Sciatic nerve (tissue), 2 donors: ENCODE measurements at regions of chr4 and their contacts with region 1.

Region 1: GRCh38 chr4:155578726-155579370 is 87.8 kb upstream of the GUCY1A1 start:
- DNase-seq: no peak
- ATAC-seq: no peak

Region 2: DNA sequence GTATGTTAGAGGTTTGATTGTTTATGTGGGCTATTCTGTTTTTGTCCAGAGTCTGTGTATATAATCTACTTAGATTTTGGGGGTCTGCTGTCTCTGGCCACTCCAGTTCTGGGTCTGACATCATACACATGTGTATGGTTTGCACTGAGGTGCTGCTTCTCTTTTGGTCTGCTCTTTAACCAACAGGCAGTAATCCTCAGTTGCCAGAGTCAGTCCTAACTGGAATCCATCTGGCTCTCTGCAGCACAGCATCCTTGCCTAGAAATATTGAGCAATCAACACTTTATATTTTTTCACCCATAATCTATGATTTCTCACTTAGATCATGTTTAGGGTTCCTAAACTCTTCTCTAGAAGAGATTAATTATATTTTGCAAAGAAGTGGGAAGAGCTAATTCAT is 1691.6 kb before region 1 on chr4:
- intact Hi-C with region 1: loop called (anchors 10 kb)
- DNase-seq: no peak
- ATAC-seq: peak; percentile 54

Region 3: DNA sequence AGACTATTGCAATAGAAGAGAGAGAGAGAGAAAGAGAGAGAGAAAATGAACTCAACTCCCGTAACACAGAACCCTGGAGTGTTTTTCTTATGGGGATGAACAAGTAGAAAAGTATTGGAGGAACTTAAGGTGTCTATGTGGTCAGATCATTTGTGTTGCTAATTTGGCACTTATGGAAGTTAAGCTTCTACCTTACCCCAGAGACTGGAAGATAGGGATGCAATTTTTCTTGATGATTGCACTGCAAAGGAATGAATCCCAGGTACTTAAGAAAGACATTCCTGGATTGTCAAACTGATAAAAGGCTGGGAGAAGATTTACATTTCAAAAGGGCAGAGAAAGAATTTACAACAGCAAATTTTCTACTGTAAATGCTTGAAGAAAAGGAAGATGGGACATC is 259.3 kb before region 1 on chr4:
- intact Hi-C with region 1: no loop called
- DNase-seq: no peak
- ATAC-seq: no peak

Region 4: DNA sequence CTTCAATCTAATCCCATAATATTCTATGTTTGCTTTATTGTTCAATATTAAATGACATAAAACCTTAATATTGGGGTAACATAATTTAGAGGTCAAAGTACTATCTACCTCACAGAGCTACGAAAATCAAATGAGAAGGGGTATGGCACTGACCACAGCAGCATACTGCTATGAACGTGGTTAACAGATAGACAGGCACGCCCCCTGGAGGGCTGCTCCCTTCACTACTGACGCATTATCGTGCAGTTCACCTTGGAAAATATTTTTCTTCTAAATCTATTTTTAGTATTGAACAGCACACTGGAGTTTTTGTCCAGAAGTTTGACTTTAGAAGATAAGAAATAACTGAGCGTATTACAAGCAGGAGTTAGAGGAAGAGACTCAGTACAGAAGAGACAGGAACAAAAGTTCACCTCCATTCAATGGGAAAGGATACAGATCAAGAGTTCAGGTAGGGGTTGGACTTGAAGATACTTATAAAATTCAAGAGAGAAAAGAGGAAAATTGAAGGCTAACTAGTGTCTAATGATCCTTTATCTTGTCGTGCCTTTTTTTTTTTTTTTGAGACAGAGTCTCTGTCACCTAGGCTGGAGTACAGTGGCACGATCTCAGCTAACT is 224.8 kb before region 1 on chr4:
- intact Hi-C with region 1: no loop called
- DNase-seq: peak; percentile 75
- ATAC-seq: peak; percentile 78

Region 5: DNA sequence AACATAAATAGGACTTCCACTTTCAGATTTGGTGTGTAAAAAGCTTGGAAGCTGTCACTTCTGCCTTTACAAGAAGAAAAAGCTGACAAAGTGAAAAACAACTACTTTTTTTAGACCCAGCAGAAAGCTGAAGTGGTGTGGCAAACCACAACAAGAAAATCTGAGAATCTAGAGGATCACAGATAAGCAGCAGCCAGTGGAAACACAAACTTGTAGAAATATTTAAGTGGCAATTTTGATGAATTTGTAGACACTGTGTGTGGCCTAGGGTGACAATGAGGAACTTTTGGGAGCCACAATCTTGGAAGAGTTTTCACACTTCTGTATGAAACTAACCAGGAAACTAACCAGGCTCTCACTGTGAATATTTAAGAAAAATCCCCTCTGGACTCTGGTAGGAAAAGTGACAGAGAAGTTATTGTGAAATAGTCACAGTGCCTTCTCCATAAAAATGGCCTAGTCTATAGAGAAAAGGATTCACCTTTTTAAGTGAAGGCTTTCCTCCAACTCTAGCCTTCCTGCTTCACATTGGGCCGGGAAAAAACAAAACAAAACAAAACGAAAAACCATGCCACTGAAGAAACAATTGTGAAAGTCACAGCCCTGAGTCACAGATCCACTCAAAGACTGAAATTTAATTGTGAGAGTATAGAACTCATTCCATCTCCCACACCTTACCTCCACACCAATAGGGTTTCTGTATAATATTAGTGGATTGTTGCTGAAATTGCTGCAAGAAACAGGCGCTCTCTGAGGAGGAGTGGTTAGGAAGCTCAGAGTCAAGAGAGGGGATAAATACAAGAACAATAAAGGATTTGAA is 61.1 kb after region 1 on chr4:
- intact Hi-C with region 1: no loop called
- DNase-seq: no peak
- ATAC-seq: peak; percentile 71